Activated B cell treated with CpG ODN at 0.5 μM for 24 hours (primary cell): ENCODE measurements at regions of chr10 and their contacts with region 1.

Region 1: GRCh38 chr10:92290837-92291615 is at the starts of genes CPEB3 and MARCHF5:
- DNase-seq: peak; percentile 87
- ATAC-seq: peak; percentile 97
- H3K4me3 Mint-ChIP-seq: peak within 1 kb of the TSS; percentile 96
- H3K27ac Mint-ChIP-seq: peak within 1 kb of the TSS; percentile 84
- H3K4me1 Mint-ChIP-seq: peaks cover 28% of the 10 kb centered on the region
- H3K27me3 Mint-ChIP-seq: no peaks in the 10 kb centered on the region
- CTCF ChIP-seq: no peak
- total RNA-seq, gene CPEB3: 2.2 and 2.5 TPM in 2 replicates
- total RNA-seq, gene MARCHF5: 21.6 and 26.5 TPM in 2 replicates

Region 2: GRCh38 chr10:91923371-91924211 is 367.4 kb before region 1 on chr10 and contains the start of gene BTAF1:
- CTCF ChIA-PET with region 1: no interaction called
- POLR2A ChIA-PET with region 1: no interaction called
- intact Hi-C with region 1: loop called (anchors 1 kb)
- DNase-seq: peak; percentile 91
- ATAC-seq: peak; percentile 94
- H3K4me3 Mint-ChIP-seq: peak within 1 kb of the TSS; percentile 92
- H3K27ac Mint-ChIP-seq: peak within 1 kb of the TSS; percentile 96
- H3K4me1 Mint-ChIP-seq: peaks cover 42% of the 10 kb centered on the region
- H3K27me3 Mint-ChIP-seq: no peaks in the 10 kb centered on the region
- CTCF ChIP-seq: no peak
- total RNA-seq, gene BTAF1: 63.4 and 74.7 TPM in 2 replicates

Region 3: GRCh38 chr10:92103376-92104090 is 187.5 kb before region 1 on chr10:
- CTCF ChIA-PET with region 1: interaction called, 3 read pairs
- POLR2A ChIA-PET with region 1: interaction called, 13 read pairs
- intact Hi-C with region 1: no loop called
- DNase-seq: no peak
- ATAC-seq: no peak
- H3K4me3 Mint-ChIP-seq: no peak overlapping the region
- H3K27ac Mint-ChIP-seq: no peak overlapping the region
- H3K4me1 Mint-ChIP-seq: peaks cover 13% of the 10 kb centered on the region
- H3K27me3 Mint-ChIP-seq: no peaks in the 10 kb centered on the region
- CTCF ChIP-seq: no peak

Region 4: GRCh38 chr10:92208736-92209327 is 82.2 kb before region 1 on chr10:
- CTCF ChIA-PET with region 1: interaction called, 3 read pairs
- POLR2A ChIA-PET with region 1: interaction called, 11 read pairs
- intact Hi-C with region 1: loop called (anchors 1 kb)
- DNase-seq: no peak
- ATAC-seq: no peak
- H3K4me3 Mint-ChIP-seq: no peak overlapping the region
- H3K27ac Mint-ChIP-seq: no peak overlapping the region
- H3K4me1 Mint-ChIP-seq: peaks cover 15% of the 10 kb centered on the region
- H3K27me3 Mint-ChIP-seq: no peaks in the 10 kb centered on the region
- CTCF ChIP-seq: no peak

Region 5: DNA sequence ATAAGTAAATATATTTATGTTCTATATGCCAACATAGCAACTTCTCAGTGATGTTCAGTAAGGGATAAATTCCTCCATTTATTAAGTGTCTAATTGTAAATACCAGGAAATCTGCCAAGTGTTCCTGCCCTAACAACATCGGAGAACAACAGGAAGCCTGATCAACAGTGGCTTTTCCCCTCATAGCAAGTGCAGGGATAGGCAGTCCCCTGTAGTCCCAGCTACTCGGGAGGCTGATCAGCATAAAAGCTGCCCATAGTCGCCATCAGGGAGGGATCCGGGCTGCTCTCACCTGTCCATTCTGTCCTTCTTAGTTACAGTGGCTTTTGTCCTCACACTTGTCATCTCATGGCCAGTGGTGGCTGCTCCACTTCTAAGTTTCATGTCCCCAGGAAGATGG is 141.6 kb after region 1 on chr10:
- CTCF ChIA-PET with region 1: interaction called, 4 read pairs
- POLR2A ChIA-PET with region 1: no interaction called
- intact Hi-C with region 1: loop called (anchors 1 kb)
- DNase-seq: no peak
- ATAC-seq: no peak
- H3K4me3 Mint-ChIP-seq: no peak overlapping the region
- H3K27ac Mint-ChIP-seq: no peak overlapping the region
- H3K4me1 Mint-ChIP-seq: no peaks in the 10 kb centered on the region
- H3K27me3 Mint-ChIP-seq: no peaks in the 10 kb centered on the region
- CTCF ChIP-seq: no peak